Activated CD4-positive, alpha-beta memory T cell treated with anti-CD3 and anti-CD28 coated beads for 36 hours (primary cell): ENCODE measurements at regions of chr17 and their contacts with region 1.

Region 1: DNA sequence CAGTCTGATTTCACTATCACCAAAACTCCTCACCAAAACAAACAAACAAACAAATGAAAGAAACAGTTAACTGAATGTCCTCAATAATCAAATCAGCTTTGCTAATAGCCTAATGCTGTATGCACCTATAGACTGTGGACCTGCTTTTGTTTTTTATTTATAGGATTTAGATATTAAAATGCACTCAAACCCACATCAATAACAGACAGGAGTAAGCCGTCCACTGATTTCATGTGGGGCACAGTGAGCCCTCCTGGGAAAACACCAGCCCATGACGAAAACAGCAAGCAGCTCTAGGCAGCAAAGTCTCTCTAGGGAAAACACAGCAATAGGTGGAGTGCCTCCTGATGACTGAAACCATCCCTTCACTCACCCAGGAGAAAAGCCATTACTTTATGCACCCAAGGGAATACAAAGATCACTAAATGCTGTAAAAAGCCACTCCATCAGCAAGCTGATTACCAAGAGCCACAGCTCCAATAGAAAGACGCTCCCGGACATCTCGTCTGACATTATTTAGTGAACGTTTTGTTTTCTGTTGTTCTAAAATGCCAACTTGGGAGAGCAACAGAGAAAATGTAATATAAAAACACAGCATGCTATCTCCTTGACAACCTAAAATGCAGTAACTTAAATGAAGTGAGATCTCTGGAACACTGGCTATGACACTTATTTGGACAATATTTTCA is 47.8 kb downstream of the ANKFY1 start:
- DNase-seq: no peak
- H3K4me3 Mint-ChIP-seq: no peak overlapping the region
- H3K27ac Mint-ChIP-seq: no peak overlapping the region
- H3K4me1 Mint-ChIP-seq: peaks cover 6% of the 10 kb centered on the region
- H3K27me3 Mint-ChIP-seq: no peaks in the 10 kb centered on the region

Region 2: DNA sequence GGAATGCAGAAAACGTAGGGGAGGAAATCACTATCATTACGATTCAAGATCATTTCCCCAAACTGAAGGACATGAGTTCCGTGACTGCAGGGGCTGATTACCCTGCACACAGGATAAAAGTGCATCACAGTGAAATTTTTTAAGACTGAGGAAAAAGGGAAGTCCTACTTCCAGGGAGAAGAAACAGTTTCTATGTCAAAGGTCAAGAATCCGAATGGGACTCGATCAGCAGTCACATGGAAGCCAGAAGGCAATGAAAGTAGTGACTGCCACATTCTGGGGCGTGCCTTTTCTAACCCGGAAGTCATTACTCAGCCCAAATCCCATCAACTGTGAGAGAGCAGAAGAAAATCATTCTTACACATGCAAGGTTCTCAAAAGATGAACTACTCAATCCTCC is 85.3 kb before region 1 on chr17:
- CTCF ChIA-PET with region 1: no interaction called
- POLR2A ChIA-PET with region 1: no interaction called
- intact Hi-C with region 1: no loop called
- DNase-seq: no peak
- H3K4me3 Mint-ChIP-seq: no peak overlapping the region
- H3K27ac Mint-ChIP-seq: peak overlapping the region; percentile 9
- H3K4me1 Mint-ChIP-seq: peaks cover 46% of the 10 kb centered on the region
- H3K27me3 Mint-ChIP-seq: no peaks in the 10 kb centered on the region

Region 3: GRCh38 chr17:4199818-4200402 is 16.1 kb before region 1 on chr17:
- CTCF ChIA-PET with region 1: interaction called, 21 read pairs
- POLR2A ChIA-PET with region 1: no interaction called
- intact Hi-C with region 1: no loop called
- DNase-seq: peak; percentile 45
- H3K4me3 Mint-ChIP-seq: no peak overlapping the region
- H3K27ac Mint-ChIP-seq: no peak overlapping the region
- H3K4me1 Mint-ChIP-seq: peaks cover 13% of the 10 kb centered on the region
- H3K27me3 Mint-ChIP-seq: no peaks in the 10 kb centered on the region

Region 4: DNA sequence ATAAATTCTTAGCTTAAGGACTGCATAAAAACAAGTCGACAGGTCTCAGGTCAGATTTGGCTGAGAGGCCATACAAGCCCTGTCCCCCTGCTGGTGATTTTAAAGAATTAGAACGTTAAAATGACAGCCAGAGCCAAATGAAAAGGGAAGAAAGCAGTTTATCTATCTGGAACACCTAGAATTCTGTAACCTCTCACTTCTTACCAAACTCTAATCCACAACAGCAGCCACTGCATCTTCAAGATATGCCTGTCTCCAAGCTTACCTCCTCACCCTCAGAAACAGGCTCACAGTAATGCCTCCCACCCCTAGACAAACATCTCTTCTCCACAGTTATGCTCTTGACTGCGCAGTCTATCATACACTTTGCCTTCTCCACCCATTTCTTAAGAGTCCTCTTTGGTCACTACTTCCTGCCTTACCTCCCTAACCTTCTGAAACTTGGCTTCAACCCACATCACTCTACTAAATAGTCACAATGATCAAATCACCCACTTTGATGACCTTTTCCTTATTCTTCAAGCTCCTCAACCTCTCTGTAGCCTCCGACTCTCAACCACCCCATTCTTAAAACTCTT is 33.5 kb after region 1 on chr17:
- CTCF ChIA-PET with region 1: interaction called, 17 read pairs
- POLR2A ChIA-PET with region 1: no interaction called
- intact Hi-C with region 1: no loop called
- DNase-seq: no peak
- H3K4me3 Mint-ChIP-seq: no peak overlapping the region
- H3K27ac Mint-ChIP-seq: no peak overlapping the region
- H3K4me1 Mint-ChIP-seq: peaks cover 48% of the 10 kb centered on the region
- H3K27me3 Mint-ChIP-seq: no peaks in the 10 kb centered on the region

Region 5: DNA sequence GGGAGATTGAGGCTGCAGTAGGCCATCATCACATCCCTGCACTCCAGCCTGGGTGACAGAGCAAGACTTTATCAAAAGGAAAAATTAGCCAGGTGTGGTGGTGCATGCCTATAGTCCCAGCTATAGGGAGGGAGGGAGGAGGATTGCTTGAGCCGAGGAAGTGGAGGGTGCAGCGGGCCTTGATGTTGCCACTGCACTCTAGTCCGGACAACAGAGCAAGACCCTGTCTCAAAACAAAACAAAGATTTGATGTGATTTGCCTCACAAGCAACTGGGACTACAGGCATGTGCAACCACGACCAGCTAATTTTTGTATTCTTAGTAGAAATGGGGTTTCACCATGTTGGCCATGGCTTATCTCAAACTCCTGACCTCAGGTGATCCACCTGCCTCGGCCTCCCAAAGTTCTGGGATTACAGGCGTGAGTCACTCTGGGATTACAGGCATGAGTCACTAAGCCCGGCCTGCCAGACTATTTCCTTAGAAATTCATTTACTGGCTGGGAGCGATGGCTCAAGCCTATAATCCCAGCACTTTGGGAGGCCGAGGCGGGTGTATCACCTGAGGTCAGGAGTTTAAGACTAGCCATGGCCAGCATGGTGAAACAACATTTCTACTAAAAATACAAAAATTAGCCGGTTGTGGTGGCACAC is 139.0 kb after region 1 on chr17:
- CTCF ChIA-PET with region 1: no interaction called
- POLR2A ChIA-PET with region 1: no interaction called
- intact Hi-C with region 1: no loop called
- DNase-seq: no peak
- H3K4me3 Mint-ChIP-seq: no peak overlapping the region
- H3K27ac Mint-ChIP-seq: no peak overlapping the region
- H3K4me1 Mint-ChIP-seq: peaks cover 45% of the 10 kb centered on the region
- H3K27me3 Mint-ChIP-seq: no peaks in the 10 kb centered on the region

Region 6: GRCh38 chr17:4366327-4367063 is 150.5 kb after region 1 on chr17 and contains the start of gene UBE2G1:
- CTCF ChIA-PET with region 1: no interaction called
- POLR2A ChIA-PET with region 1: no interaction called
- intact Hi-C with region 1: loop called (anchors 1 kb)
- DNase-seq: peak; percentile 100
- H3K4me3 Mint-ChIP-seq: peak within 1 kb of the TSS; percentile 73
- H3K27ac Mint-ChIP-seq: peak within 1 kb of the TSS; percentile 91
- H3K4me1 Mint-ChIP-seq: peaks cover 33% of the 10 kb centered on the region
- H3K27me3 Mint-ChIP-seq: no peaks in the 10 kb centered on the region
- total RNA-seq, gene UBE2G1: 54.4 to 57.6 TPM

Region 7: GRCh38 chr17:4420692-4421131 is 204.7 kb after region 1 on chr17:
- CTCF ChIA-PET with region 1: interaction called, 91 read pairs
- POLR2A ChIA-PET with region 1: no interaction called
- intact Hi-C with region 1: no loop called
- DNase-seq: peak; percentile 68
- H3K4me3 Mint-ChIP-seq: no peak overlapping the region
- H3K27ac Mint-ChIP-seq: no peak overlapping the region
- H3K4me1 Mint-ChIP-seq: peaks cover 3% of the 10 kb centered on the region
- H3K27me3 Mint-ChIP-seq: no peaks in the 10 kb centered on the region